Caco-2 (cell line): ENCODE measurements at regions of chrX and their contacts with region 1.

Region 1: GRCh38 chrX:38985375-38985774 is 184.1 kb downstream of the MID1IP1 start:
- DNase-seq: no peak
- H3K4me3 ChIP-seq: no peak overlapping the region
- H3K4me3 Mint-ChIP-seq: no peak overlapping the region
- H3K27ac Mint-ChIP-seq: no peak overlapping the region
- H3K4me1 ChIP-seq: peaks cover 5% of the 10 kb centered on the region
- H3K4me1 Mint-ChIP-seq: peaks cover 15% of the 10 kb centered on the region
- H3K27me3 ChIP-seq: no peaks in the 10 kb centered on the region
- H3K27me3 Mint-ChIP-seq: no peaks in the 10 kb centered on the region
- CTCF ChIP-seq: no peak

Region 2: GRCh38 chrX:38768079-38768478 is 217.3 kb before region 1 on chrX:
- CTCF ChIA-PET with region 1: no interaction called
- POLR2A ChIA-PET with region 1: no interaction called
- intact Hi-C with region 1: loop called (anchors 5 kb)
- DNase-seq: no peak
- H3K4me3 ChIP-seq: no peak overlapping the region
- H3K4me3 Mint-ChIP-seq: no peak overlapping the region
- H3K27ac Mint-ChIP-seq: no peak overlapping the region
- H3K4me1 ChIP-seq: no peaks in the 10 kb centered on the region
- H3K4me1 Mint-ChIP-seq: no peaks in the 10 kb centered on the region
- H3K27me3 ChIP-seq: no peaks in the 10 kb centered on the region
- H3K27me3 Mint-ChIP-seq: peaks cover 9% of the 10 kb centered on the region
- CTCF ChIP-seq: no peak

Region 3: DNA sequence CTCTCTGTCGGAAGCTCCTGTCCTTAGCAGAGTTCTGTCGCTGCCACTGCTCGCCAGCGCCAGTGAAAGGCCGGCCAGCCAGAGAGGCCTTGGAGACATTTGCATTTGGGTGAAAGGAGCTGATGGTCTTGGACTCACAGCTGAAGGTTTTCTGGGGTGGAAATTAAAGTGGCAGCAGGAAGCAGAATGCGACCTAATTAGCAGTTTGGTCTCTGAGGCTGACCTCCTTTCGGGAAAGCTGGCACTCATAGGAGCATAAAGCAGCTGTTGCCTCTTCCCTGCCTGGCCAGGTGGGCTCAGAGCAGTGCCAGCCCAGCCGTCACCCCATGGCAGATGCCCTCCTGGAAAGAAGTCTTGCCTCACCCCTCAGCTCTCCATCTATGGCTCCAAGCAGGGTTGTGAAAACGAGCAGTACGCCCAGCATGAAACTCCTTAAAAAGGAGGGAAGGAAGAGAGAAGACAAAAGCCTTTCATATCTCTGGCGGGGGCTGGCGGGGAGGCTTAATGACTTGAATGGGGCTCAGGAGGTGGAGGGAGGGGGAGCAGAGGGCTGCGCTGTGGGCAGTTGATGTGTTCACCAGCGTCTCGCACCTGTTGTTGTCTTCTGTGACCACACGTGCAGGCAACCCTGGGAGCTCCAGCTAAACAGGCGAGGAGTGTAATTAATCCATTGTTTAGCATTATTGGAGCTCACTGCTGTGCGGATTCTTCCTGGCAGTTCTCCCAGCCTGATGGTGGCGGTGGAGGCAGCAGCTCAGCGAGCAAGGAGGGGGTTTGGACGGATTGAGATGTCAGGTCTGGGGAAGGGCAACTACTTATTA is 79.9 kb after region 1 on chrX:
- CTCF ChIA-PET with region 1: no interaction called
- POLR2A ChIA-PET with region 1: no interaction called
- intact Hi-C with region 1: no loop called
- DNase-seq: no peak
- H3K4me3 ChIP-seq: no peak overlapping the region
- H3K4me3 Mint-ChIP-seq: no peak overlapping the region
- H3K27ac Mint-ChIP-seq: no peak overlapping the region
- H3K4me1 ChIP-seq: no peaks in the 10 kb centered on the region
- H3K4me1 Mint-ChIP-seq: no peaks in the 10 kb centered on the region
- H3K27me3 ChIP-seq: no peaks in the 10 kb centered on the region
- H3K27me3 Mint-ChIP-seq: no peaks in the 10 kb centered on the region
- CTCF ChIP-seq: no peak